Panc1 (cell line): ENCODE measurements at regions of chr6 and their contacts with region 1.

Region 1: DNA sequence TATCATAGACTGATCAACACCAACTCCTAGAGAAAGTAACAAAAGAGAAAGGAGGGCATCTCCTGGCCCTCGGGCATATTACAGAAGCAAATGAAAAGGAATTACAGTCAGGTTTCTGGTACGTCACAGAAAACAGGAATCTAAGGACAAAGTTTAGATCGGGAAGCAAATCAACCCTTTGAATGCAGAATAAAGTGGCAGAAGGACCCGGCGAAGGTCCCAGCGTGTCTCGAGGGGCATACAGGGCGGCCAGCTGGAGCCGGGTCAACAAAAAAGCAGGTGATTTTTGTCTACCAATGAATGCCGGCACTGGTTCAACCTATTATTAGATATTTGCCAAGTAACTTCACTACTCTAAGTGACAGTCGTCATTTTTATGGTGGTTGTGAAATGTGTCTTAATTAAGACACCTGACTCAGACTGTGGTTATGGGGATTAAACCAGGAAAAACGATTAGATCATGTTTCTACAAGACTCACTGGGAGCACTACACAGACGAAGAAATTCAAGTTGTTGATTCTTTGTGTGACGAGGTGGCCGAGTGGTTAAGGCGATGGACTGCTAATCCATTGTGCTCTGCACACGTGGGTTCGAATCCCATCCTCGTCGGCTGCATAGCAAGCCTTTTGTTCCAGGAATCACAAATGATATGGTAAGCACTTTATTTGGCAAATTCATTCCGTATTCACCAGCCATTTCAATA is 12.4 kb upstream of the ZSCAN9 start:
- DNase-seq: peak; percentile 97
- ATAC-seq: peak; percentile 93
- H3K4me3 ChIP-seq: peak overlapping the region; percentile 65 to 80
- H3K27ac ChIP-seq: peak overlapping the region; percentile 77
- H3K4me1 ChIP-seq: peaks cover 8% of the 10 kb centered on the region
- H3K27me3 ChIP-seq: no peaks in the 10 kb centered on the region
- CTCF ChIP-seq: peak; percentile 50

Region 2: GRCh38 chr6:27706431-27706830 is 506.2 kb before region 1 on chr6:
- CTCF ChIA-PET with region 1: no interaction called
- POLR2A ChIA-PET with region 1: no interaction called
- in situ Hi-C with region 1: no loop called
- intact Hi-C with region 1: no loop called
- DNase-seq: no peak
- ATAC-seq: no peak
- H3K4me3 ChIP-seq: no peak overlapping the region
- H3K27ac ChIP-seq: no peak overlapping the region
- H3K4me1 ChIP-seq: no peaks in the 10 kb centered on the region
- H3K27me3 ChIP-seq: no peaks in the 10 kb centered on the region
- CTCF ChIP-seq: no peak

Region 3: DNA sequence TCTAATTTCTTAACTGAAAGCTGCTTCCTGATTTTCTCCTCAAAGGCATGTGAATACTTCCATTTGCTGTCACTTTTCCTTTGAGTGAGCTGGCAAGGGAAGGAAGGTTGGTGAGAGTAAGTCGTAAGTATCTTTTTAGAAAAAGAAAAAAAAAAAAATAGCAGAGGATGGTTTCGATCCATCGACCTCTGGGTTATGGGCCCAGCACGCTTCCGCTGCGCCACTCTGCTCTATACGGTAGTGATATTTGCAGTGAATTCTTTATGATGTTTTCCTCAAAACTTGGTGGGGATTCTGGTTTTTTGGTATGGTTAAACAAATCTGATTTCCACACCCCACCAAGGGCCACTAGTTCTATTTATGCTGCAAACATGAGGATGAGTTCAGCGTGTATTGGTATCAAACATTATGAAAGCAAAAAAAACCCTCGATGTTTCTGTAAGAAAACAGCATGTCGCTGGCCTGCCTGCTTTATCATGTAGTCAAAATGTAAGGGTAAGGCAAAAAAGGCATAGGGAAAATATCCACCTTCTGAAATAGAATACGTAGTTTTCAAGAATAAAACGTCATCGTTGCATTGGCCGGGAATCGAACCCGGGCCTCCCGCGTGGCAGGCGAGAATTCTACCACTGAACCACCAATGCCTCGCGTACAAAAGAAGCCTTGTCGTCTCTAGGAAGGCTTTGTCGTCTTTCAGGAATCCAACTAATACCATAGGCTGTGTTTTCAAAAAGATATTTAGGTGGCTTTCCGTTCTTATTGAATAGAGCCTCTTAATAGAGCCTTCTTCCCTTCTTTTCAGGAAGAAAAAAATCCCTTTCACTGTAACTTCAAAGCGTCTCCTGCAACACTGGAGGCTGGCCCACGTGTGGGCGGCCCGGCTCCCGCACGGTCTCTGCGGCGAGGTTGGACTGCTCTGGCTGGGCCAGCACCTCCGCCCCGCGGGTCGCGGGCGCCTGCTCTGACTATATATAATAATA is 310.0 kb before region 1 on chr6:
- CTCF ChIA-PET with region 1: no interaction called
- POLR2A ChIA-PET with region 1: no interaction called
- in situ Hi-C with region 1: no loop called
- intact Hi-C with region 1: loop called (anchors 5 kb)
- DNase-seq: no peak
- ATAC-seq: peak; percentile 93
- H3K4me3 ChIP-seq: peak overlapping the region; percentile 70 to 78
- H3K27ac ChIP-seq: peak overlapping the region; percentile 85
- H3K4me1 ChIP-seq: peaks cover 7% of the 10 kb centered on the region
- H3K27me3 ChIP-seq: no peaks in the 10 kb centered on the region
- CTCF ChIP-seq: no peak

Region 4: DNA sequence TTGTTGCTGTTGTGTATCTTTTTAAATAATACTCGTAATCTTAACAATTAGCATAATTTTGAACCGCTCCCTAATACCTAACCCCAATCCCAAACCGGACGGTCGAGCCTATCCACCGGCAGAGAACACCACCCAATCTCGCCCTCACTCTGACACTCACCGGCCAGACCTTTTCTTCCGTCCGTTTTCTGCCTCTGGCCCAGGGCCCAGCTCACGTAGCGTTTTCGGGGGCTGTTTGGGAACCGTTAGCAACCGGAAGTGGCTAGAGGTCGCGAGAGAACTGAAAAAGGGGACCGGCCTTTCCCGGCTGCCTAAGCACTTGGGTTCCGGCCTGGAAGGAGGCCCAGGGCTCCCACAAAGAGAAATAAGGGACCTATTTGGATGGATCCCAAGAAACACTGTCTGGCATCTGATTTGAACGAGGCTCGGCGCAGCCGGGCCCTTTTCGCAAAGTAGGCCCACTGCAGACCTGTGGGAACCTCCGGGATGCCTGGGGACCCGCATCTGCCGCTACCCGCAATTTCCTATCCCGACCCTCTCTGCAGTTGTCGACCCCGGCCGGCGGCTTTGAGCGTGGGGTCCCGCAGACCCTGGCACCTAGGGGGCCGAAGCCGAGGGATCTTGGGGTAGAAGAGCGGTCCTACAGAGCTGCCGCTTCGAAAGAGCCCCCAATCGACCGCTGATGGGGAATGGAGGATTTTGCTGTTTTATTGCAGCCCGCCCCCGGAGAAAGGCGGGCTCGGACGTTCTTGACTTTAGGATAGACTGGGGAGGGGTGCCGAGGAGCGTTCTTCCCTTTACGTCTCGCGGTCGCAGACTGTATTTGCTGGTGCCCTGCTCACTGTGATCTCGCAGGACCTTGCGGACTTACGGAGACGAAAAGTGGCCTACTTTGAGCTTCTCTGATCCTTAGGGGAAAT is 75.8 kb before region 1 on chr6:
- CTCF ChIA-PET with region 1: no interaction called
- POLR2A ChIA-PET with region 1: no interaction called
- in situ Hi-C with region 1: no loop called
- intact Hi-C with region 1: loop called (anchors 5 kb)
- DNase-seq: peak; percentile 65
- ATAC-seq: peak; percentile 86
- H3K4me3 ChIP-seq: peak overlapping the region; percentile 79 to 81
- H3K27ac ChIP-seq: peak overlapping the region; percentile 100
- H3K4me1 ChIP-seq: peaks cover 36% of the 10 kb centered on the region
- H3K27me3 ChIP-seq: no peaks in the 10 kb centered on the region
- CTCF ChIP-seq: no peak

Region 5: GRCh38 chr6:28225056-28225834 is 12.6 kb after region 1 on chr6 and contains the start of gene ZSCAN9:
- CTCF ChIA-PET with region 1: no interaction called
- POLR2A ChIA-PET with region 1: no interaction called
- in situ Hi-C with region 1: no loop called
- intact Hi-C with region 1: no loop called
- DNase-seq: no peak
- ATAC-seq: peak; percentile 96
- H3K4me3 ChIP-seq: peak within 1 kb of the TSS; percentile 77 to 96
- H3K27ac ChIP-seq: peak within 1 kb of the TSS; percentile 98
- H3K4me1 ChIP-seq: peaks cover 15% of the 10 kb centered on the region
- H3K27me3 ChIP-seq: no peaks in the 10 kb centered on the region
- CTCF ChIP-seq: no peak
- total RNA-seq, gene ZSCAN9: 14.4 TPM